AG04450 (cell line): ENCODE measurements at regions of chr1 and their contacts with region 1.

Region 1: DNA sequence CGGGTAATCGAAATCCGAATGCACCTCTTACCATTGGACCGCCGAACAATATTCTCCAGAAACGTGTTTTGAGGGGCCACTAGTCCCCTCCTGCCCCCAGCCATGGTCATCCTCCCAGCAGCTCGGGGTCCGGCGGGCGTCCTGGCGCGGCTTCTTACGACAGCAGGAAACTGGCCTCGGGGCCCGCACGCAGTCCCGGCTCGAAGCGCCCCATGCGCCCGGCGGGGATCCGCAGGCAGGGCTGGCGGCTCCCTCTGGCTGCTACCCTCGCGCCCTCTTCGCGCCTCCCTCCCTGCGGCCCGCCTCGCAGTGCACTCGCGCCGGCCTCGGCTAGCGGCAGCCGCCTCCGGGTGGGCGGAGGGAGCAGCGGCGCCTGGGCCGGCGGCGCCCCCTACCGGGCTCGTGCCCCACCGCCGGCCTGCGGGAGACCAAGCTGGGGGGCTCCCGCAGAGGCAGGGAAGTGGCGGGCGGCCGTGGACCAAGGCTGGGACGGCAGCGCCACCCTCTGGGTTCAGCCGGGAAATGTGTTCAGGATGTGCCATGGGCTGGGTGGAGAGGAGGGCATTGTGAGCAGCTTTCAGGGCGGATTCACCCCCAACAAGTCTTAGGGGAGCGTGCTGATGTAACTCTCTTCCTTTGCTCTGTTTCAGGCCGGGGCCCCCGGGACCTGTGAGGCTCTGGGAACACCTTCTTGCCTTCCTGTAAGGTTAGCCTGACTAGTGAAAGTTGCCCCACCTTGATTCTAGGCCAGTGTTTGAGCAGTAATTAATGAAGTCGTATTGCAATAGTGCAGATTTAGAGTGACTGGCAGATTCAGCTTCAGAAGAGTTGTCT is at the start of gene KCNH1:
- DNase-seq: peak; percentile 26
- H3K4me3 ChIP-seq: peak within 1 kb of the TSS; percentile 58
- H3K27ac ChIP-seq: no peak within 1 kb of the TSS
- H3K27me3 ChIP-seq: peaks cover 17% of the 10 kb centered on the region
- CTCF ChIP-seq: peak; percentile 73
- polyA plus RNA-seq, gene KCNH1: 0.31 and 0.62 TPM in 2 replicates

Region 2: GRCh38 chr1:210415846-210416448 is 718.1 kb before region 1 on chr1:
- CTCF ChIA-PET with region 1: interaction called, 258 read pairs
- POLR2A ChIA-PET with region 1: no interaction called
- DNase-seq: no peak
- H3K4me3 ChIP-seq: no peak overlapping the region
- H3K27ac ChIP-seq: no peak overlapping the region
- H3K27me3 ChIP-seq: no peaks in the 10 kb centered on the region
- CTCF ChIP-seq: peak; percentile 27

Region 3: GRCh38 chr1:210448297-210448892 is 685.7 kb before region 1 on chr1:
- CTCF ChIA-PET with region 1: interaction called, 233 read pairs
- POLR2A ChIA-PET with region 1: no interaction called
- DNase-seq: peak; percentile 30
- H3K4me3 ChIP-seq: no peak overlapping the region
- H3K27ac ChIP-seq: no peak overlapping the region
- H3K27me3 ChIP-seq: no peaks in the 10 kb centered on the region
- CTCF ChIP-seq: peak; percentile 75

Region 4: GRCh38 chr1:210558302-210558701 is 575.8 kb before region 1 on chr1:
- CTCF ChIA-PET with region 1: interaction called, 13 read pairs
- POLR2A ChIA-PET with region 1: no interaction called
- DNase-seq: no peak
- H3K4me3 ChIP-seq: no peak overlapping the region
- H3K27ac ChIP-seq: no peak overlapping the region
- H3K27me3 ChIP-seq: no peaks in the 10 kb centered on the region
- CTCF ChIP-seq: no peak

Region 5: GRCh38 chr1:210597555-210598134 is 536.4 kb before region 1 on chr1:
- CTCF ChIA-PET with region 1: interaction called, 26 read pairs
- POLR2A ChIA-PET with region 1: no interaction called
- DNase-seq: peak; percentile 85
- H3K4me3 ChIP-seq: no peak overlapping the region
- H3K27ac ChIP-seq: peak overlapping the region; percentile 100
- H3K27me3 ChIP-seq: no peaks in the 10 kb centered on the region
- CTCF ChIP-seq: 0 out of 2 replicates have a peak, but pooled peaks have one; percentile 1

Region 6: GRCh38 chr1:211145944-211146343 is 11.9 kb after region 1 on chr1:
- CTCF ChIA-PET with region 1: interaction called, 14 read pairs
- POLR2A ChIA-PET with region 1: no interaction called
- DNase-seq: no peak
- H3K4me3 ChIP-seq: no peak overlapping the region
- H3K27ac ChIP-seq: no peak overlapping the region
- H3K27me3 ChIP-seq: no peaks in the 10 kb centered on the region
- CTCF ChIP-seq: no peak